Activated CD4-positive, alpha-beta memory T cell treated with anti-CD3 and anti-CD28 coated beads for 36 hours (primary cell): ENCODE measurements at regions of chr4 and their contacts with region 1.

Region 1: DNA sequence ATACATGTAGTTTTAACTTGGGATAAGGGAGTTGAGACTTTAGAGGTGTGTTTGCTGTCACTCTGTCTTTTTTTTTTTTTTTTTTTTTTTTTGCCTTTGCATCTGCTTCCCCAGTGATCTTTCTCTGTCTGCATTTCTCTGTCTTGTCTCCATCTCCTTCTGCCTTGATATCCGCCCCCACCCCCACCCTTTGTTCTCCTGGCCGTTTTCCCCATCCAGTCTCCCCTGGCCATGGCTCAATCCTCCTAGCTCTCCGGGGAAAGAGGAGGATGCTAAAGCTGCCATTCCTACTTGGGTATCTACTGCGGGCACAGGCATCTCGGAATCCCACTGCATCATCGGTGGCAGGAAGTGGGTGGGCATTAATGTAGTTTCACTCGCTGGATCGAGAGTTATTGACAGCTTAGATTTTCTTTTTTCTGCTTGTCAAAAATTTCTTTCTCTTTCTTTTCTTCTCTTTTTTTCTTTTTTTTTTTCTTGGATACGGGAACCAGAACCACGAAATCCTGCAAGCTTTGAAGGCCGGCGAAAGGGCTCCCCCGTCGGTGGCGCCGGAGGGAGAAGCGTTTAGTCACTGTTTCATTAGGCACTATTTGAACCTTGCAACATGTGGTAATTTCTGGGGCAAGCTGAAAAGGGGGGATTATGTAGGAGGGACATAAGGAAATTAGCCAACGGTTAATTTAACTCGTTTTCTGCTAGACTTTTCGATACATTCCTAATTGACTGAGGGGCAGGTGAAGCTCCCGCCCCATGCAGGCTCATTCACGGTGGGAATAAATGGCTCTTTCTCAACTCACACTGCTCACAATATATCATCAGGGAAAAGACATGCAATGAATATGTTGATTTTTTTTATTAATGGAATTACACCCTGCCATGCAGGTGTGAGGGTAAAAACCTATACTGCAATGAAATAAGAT is 8.2 kb downstream of the GSX2 start:
- DNase-seq: no peak
- H3K4me3 Mint-ChIP-seq: peak overlapping the region; percentile 23
- H3K27ac Mint-ChIP-seq: no peak overlapping the region
- H3K4me1 Mint-ChIP-seq: peaks cover 35% of the 10 kb centered on the region
- H3K27me3 Mint-ChIP-seq: peaks cover 75% of the 10 kb centered on the region

Region 2: DNA sequence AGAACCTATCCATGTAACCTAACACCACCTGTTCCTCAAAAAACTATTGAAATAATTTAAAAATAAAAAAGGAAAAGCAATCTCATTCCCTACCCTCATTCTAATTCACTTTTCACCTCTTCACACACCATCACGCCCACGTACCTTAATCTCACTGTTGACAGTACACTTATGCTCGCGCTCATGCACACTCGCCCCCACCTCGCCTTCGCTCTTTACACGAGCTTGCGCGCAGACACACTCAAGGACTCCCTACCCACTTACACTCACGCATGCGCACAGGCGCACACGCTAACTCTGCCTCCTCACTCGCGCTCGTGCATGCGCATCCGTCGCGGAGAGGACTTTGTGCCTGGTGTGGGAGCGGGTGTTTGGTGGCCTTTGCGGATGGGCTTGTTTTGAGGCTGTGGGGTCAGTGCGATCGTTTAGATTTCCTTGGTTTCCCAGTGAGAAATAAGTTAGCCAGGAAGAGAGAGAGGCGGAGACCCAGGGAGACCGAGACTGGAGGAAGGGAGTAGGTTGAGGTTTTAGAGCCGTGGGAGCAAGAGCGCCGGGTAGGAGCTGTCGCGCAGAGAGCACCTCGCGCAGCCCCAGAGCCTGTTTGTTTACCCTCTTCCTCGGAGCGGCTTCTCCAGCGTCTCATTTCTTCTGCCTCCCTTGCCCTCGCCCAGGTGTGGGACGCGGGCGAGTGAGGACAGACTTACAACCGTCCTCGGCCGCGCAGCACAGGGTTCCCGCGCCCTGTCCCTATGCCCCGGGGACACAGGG is 16.4 kb before region 1 on chr4:
- CTCF ChIA-PET with region 1: no interaction called
- POLR2A ChIA-PET with region 1: no interaction called
- intact Hi-C with region 1: loop called (anchors 2 kb)
- DNase-seq: peak; percentile 80
- H3K4me3 Mint-ChIP-seq: peak overlapping the region; percentile 76
- H3K27ac Mint-ChIP-seq: no peak overlapping the region
- H3K4me1 Mint-ChIP-seq: peaks cover 25% of the 10 kb centered on the region
- H3K27me3 Mint-ChIP-seq: peaks cover 54% of the 10 kb centered on the region